ENCODE measurements at regions of chr9 and their contacts with region 1.

Region 1: GRCh38 chr9:37197158-37198038 is 77.0 kb downstream of the ZCCHC7 start:
- DNase-seq: peak; percentile 27
- H3K4me3 Mint-ChIP-seq: peak overlapping the region; percentile 19
- H3K27ac Mint-ChIP-seq: peak overlapping the region; percentile 82
- H3K4me1 Mint-ChIP-seq: peaks cover 70% of the 10 kb centered on the region
- H3K27me3 Mint-ChIP-seq: no peaks in the 10 kb centered on the region

Region 2: DNA sequence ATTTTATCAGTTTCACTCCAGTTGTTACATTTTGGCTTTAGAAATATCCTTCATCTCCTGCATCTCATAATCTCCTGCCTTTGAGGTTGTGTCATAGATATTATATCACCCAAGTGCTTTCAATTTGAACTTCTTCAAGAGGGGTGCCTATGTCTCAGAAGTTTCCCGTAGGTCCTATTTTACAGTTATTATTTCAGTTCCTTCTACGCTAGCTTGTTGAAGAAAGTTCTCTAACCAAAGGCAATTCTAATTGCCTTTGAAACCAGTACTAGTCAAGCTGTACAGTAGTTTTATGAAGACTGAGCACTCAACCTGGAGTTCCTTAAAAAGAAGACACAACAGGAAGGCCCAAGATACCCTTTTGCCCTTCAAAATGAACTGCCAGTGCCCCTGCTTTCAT is 39.4 kb after region 1 on chr9:
- CTCF ChIA-PET with region 1: no interaction called
- intact Hi-C with region 1: no loop called
- DNase-seq: no peak
- H3K4me3 Mint-ChIP-seq: no peak overlapping the region
- H3K27ac Mint-ChIP-seq: no peak overlapping the region
- H3K4me1 Mint-ChIP-seq: peaks cover 29% of the 10 kb centered on the region
- H3K27me3 Mint-ChIP-seq: no peaks in the 10 kb centered on the region

Region 3: DNA sequence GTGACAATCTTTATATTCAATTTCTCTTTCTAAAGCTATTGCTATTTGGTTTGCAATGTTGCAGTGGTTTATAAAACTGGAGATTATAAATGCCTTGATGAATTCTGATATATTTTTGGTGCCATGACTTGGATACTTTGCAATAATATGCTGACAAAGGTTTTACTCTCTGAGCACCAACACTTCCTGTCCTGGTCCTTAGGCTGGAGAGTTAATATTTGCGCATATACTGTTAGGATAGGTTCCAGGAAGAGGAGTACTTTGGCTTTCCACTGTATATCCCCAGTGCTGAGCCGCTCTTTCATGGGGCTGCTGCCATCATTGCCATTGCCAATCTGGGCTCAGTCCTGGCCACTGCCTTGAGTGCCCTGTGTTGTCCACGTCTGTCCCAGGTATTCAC is 62.6 kb after region 1 on chr9:
- CTCF ChIA-PET with region 1: no interaction called
- intact Hi-C with region 1: no loop called
- DNase-seq: no peak
- H3K4me3 Mint-ChIP-seq: no peak overlapping the region
- H3K27ac Mint-ChIP-seq: no peak overlapping the region
- H3K4me1 Mint-ChIP-seq: peaks cover 26% of the 10 kb centered on the region
- H3K27me3 Mint-ChIP-seq: no peaks in the 10 kb centered on the region

Region 4: DNA sequence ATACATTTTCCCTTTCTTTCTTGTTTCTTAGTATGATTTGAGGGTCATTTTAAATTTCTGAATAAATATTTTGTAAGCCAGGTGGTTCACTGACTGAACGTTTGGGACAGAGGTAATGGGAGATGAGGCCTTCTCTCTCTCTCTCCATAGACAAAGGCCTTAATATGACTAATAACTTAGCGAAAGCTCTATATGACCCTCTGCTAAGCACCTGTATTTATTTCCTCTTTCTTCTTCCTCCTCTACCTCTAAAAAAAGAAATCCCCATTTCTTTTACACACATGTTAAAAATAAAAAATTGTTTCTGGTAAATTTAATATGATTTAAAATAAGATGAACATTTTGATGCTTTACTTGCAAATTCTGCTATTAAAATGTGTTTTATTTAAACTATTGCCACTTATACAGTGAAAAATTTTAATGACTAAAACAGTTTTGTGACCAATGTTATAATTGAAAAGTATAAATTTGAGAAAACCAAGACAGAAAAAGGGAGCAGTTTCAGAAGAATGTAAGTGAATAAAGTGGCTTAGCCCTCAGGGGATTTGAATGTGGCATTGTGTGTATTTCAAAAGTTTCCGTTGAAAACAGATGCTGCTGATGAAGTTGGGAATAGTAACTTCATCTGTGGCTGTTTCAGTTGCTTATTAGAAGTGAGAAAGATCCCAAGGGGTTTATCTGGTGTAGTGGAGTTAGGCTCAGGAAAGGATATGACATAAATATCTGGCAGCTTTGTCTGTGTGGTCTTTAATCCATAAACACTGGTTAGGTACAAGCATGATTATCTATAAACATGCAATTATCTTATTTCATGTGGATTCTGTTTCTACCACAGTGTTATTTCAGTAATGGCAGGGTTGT is 96.5 kb after region 1 on chr9:
- CTCF ChIA-PET with region 1: no interaction called
- intact Hi-C with region 1: loop called (anchors 2 kb)
- DNase-seq: no peak
- H3K4me3 Mint-ChIP-seq: no peak overlapping the region
- H3K27ac Mint-ChIP-seq: peak overlapping the region; percentile 81
- H3K4me1 Mint-ChIP-seq: peaks cover 72% of the 10 kb centered on the region
- H3K27me3 Mint-ChIP-seq: no peaks in the 10 kb centered on the region

Region 5: DNA sequence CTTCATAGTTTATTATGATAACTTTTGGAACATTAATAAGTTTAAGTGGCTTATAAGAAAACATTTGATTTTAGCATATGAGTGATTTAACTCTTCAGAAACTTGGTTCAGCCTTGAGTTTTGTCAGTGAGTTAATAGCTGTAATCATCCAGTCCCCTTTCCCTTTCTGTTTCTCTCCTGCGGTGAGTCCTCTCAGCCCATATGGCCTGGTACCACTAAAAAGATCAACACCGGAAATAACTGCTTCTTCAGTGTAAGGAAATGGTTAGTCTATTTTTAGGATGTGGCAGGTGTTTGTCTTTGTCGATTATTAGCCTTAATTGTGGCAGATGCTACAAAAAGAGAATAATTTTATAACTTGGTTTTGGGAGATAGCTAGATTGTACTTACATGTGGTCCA is 104.9 kb after region 1 on chr9:
- CTCF ChIA-PET with region 1: interaction called, 3 read pairs
- intact Hi-C with region 1: loop called (anchors 2 kb)
- DNase-seq: peak; percentile 70
- H3K4me3 Mint-ChIP-seq: peak overlapping the region; percentile 25
- H3K27ac Mint-ChIP-seq: peak overlapping the region; percentile 92
- H3K4me1 Mint-ChIP-seq: peaks cover 59% of the 10 kb centered on the region
- H3K27me3 Mint-ChIP-seq: no peaks in the 10 kb centered on the region

Region 6: GRCh38 chr9:37852222-37852621 is 654.8 kb after region 1 on chr9:
- CTCF ChIA-PET with region 1: no interaction called
- intact Hi-C with region 1: loop called (anchors 5 kb)
- DNase-seq: no peak
- H3K4me3 Mint-ChIP-seq: no peak overlapping the region
- H3K27ac Mint-ChIP-seq: no peak overlapping the region
- H3K4me1 Mint-ChIP-seq: no peaks in the 10 kb centered on the region
- H3K27me3 Mint-ChIP-seq: no peaks in the 10 kb centered on the region